AG04450 (cell line): ENCODE measurements at regions of chr6 and their contacts with region 1.

Region 1: DNA sequence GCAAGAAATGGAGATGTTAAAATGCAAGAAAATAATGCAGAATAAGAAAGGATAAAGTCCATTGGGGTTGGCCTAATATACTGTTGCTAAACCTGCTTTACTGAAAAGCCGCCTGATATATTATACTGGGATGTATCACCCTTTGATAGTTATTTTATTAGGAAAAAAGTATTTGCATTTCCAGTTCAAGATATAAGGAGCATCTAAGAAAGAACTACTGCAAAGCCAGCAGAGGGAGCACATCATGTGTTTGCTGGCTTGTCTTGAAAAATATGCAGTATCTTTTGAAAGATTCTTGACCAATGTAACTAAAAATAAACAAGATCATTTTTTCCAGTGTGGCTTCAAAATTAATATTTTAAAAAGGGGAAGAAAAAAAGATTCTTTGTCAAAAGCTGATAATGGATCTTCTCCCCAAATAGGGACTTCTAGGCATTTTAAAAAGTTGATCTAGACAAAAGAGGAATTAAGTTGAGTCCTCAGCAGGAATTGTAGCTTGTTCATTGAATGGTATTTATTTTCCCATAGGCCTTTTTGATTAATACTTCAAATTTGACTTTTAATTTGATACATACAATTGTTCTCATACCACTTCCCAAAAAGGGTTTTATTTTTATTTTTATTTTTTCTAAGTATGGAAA is 214.9 kb downstream of the ZFAND3 start:
- DNase-seq: peak; percentile 34
- H3K4me3 ChIP-seq: no peak overlapping the region
- H3K27ac ChIP-seq: no peak overlapping the region
- H3K27me3 ChIP-seq: no peaks in the 10 kb centered on the region
- CTCF ChIP-seq: peak; percentile 80

Region 2: GRCh38 chr6:37705239-37706051 is 328.9 kb before region 1 on chr6:
- CTCF ChIA-PET with region 1: interaction called, 13 read pairs
- POLR2A ChIA-PET with region 1: no interaction called
- DNase-seq: no peak
- H3K4me3 ChIP-seq: peak overlapping the region; percentile 50
- H3K27ac ChIP-seq: peak overlapping the region; percentile 43
- H3K27me3 ChIP-seq: no peaks in the 10 kb centered on the region
- CTCF ChIP-seq: peak; percentile 69

Region 3: GRCh38 chr6:38012573-38012972 is 21.8 kb before region 1 on chr6:
- CTCF ChIA-PET with region 1: interaction called, 14 read pairs
- POLR2A ChIA-PET with region 1: no interaction called
- DNase-seq: peak; percentile 27
- H3K4me3 ChIP-seq: no peak overlapping the region
- H3K27ac ChIP-seq: no peak overlapping the region
- H3K27me3 ChIP-seq: no peaks in the 10 kb centered on the region
- CTCF ChIP-seq: peak; percentile 80

Region 4: DNA sequence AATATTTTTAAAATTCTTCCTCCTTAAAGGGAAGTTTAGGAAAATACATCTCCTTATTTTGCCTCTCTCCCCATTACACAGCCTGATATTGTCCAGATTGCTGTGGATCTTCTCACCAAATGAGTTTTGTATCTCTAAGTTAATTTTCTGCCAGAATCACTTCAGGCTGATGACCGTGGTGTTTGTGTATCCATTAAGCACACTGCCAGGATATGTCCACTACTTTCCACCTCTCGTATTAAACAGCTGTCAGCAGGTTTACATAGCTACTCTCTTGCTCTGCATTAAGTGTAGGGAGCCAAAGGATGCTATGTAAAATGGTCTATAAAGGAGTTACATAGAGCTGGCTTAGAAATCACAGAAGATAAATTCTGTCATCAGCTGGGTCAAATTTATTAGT is 13.8 kb before region 1 on chr6:
- CTCF ChIA-PET with region 1: interaction called, 11 read pairs
- POLR2A ChIA-PET with region 1: no interaction called
- DNase-seq: no peak
- H3K4me3 ChIP-seq: no peak overlapping the region
- H3K27ac ChIP-seq: no peak overlapping the region
- H3K27me3 ChIP-seq: no peaks in the 10 kb centered on the region
- CTCF ChIP-seq: no peak

Region 5: DNA sequence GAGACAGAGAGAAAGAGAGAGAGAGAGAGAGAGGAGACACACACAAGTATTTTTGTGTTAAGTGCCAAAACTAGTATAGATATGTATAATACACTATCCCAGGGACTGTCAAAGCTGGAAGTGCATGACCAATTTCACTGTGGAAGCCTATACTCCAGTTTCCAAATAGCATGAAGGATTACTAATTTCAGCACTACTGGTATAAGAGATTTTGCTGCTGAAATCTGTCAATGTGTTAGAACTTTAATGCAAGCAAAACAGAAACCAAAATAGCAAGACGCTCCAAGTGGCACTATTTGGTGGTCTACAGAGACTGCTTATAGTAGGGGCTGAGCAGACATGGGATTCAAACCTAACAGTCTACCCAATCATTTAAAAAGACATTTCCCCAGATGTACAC is 320.5 kb after region 1 on chr6:
- CTCF ChIA-PET with region 1: no interaction called
- POLR2A ChIA-PET with region 1: no interaction called
- DNase-seq: no peak
- H3K4me3 ChIP-seq: no peak overlapping the region
- H3K27ac ChIP-seq: no peak overlapping the region
- H3K27me3 ChIP-seq: no peaks in the 10 kb centered on the region
- CTCF ChIP-seq: no peak

Region 6: GRCh38 chr6:38570750-38571149 is 536.4 kb after region 1 on chr6:
- CTCF ChIA-PET with region 1: interaction called, 38 read pairs
- POLR2A ChIA-PET with region 1: no interaction called
- DNase-seq: no peak
- H3K4me3 ChIP-seq: no peak overlapping the region
- H3K27ac ChIP-seq: no peak overlapping the region
- H3K27me3 ChIP-seq: no peaks in the 10 kb centered on the region
- CTCF ChIP-seq: peak; percentile 55